ENCODE measurements at regions of chr11 and their contacts with region 1.

Region 1: DNA sequence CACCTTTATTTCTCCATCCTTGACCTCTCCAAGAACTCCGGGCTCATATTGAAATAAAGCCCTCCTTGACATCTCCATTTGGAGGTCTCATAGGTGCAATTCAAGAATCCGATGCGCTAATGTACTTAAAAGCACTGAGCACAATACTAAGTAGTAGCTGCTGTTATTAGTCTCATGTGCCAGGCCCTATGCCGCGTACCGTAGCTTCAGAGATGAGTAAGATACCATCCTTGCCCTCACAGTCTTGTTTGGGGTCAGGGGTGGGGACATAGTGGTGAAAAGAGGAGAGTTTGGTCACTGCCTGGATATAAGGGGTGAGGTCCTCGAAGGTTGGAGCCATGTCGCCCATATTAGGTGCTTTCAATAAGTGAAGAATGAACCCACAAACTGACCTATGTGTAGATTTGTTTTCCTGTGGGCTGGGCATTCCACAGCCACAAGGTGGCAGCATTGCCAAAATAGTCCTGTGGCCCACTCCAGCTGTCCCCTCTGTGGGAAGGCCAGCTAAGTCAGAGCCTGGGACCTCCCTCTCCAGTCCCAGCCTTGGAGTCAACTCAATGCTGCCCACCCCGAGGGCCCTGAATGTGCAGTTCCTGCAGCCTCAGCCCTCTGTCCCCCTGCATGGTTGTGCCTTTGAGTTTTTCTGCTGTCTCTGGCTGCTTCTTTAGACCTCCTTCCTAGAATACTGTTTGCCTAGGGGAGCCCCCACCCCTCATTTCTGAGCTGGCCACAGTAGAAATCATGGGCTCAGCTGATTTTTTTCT is 6.5 kb downstream of the DCPS start:
- DNase-seq: peak; percentile 83
- ATAC-seq: peak; percentile 98

Region 2: DNA sequence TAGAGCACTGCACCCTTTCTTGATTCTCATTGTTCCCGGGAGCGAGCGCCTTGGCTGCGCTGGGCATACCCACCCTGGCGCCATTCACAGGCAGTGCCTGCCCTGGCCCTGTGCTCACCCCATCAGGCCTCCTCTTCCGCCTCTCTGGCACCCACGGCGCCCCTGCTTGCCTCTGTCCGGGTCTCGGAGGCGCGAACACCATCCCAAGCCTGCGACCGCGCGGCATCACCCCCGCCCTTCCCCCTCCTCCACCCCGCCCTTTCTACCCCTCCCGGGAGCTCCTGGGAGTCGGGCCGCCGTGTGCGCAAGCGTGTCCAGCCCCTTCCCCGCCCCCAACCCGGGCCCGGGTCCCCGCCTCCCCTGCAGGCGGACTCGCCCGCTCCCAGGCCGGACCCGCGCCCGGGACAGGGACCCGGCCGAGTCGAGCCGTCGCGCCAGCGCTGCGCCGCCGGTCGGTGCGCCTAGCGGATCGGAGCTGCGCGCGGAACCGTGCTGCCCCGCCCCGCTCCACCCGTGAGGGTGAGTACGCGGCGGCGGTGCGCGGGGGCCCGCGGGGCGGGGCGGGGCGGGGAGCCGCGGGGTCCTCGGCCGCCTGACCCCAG is 45.0 kb after region 1 on chr11 and contains the start of gene ST3GAL4:
- intact Hi-C with region 1: loop called (anchors 5 kb)
- DNase-seq: peak; percentile 92
- ATAC-seq: peak; percentile 85
- total RNA-seq, gene ST3GAL4: 36.5 TPM

Region 3: GRCh38 chr11:126480410-126481302 is 170.2 kb after region 1 on chr11:
- intact Hi-C with region 1: loop called (anchors 2 kb)
- DNase-seq: peak; percentile 86
- ATAC-seq: peak; percentile 95

Region 4: GRCh38 chr11:126929179-126930061 is 619.0 kb after region 1 on chr11:
- intact Hi-C with region 1: no loop called
- DNase-seq: no peak
- ATAC-seq: peak; percentile 88